Posterior cingulate gyrus (tissue), 11 donors: ENCODE measurements at regions of chr12 and their contacts with region 1.

Region 1: DNA sequence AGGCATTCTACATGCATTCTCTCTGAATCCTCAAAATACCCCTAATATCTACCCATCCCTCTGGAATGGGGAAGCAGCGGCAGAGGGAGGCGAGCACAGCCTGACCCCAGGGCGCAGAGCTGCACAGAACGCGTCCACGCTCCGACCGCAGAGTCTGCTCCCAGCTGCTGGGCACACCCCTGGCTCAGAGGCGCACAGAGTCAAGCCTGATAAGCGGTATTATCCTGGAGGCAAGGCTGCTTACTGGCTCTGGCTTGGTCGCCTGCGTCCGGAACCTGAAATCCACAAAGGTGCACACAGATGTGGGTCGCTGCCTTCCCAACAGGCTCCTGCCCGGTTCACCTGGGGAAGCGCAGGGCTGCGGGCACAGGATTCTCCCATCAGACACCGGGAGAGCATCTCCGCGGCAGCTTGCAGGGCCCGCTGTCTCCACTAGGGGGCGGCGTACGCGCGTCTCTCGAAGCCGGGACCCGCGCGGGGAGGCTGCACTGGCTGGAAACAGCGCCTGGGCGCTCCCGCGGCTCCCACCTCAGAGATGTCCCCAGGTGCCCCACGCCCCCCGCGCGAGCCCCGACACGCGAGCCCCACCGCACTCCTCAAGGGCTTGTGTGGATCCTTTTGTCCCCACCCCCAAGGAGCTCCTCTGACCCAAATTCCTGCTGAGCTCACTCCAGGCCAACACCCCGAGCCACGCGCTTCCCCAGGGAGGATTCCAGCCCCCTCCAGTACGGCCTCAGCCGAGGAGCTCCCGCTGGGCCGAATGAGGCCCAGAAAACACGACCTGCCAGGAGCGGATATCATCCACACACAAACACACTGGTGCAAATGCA is 120.1 kb upstream of the FZD10 start:
- DNase-seq: peak; percentile 69 to 97 (median 86)

Region 2: GRCh38 chr12:130300737-130301535 is 258.7 kb after region 1 on chr12:
- intact Hi-C with region 1: no loop called
- DNase-seq: no peak

Region 3: GRCh38 chr12:130335517-130336392 is 293.6 kb after region 1 on chr12:
- intact Hi-C with region 1: loop called (anchors 1 kb)
- DNase-seq: peak in 1 of 10 donors; percentile 33